ENCODE measurements at regions of chr2 and their contacts with region 1.

Region 1: GRCh38 chr2:46062637-46063412 is 234.4 kb upstream of the EPAS1 start:
- DNase-seq: peak; percentile 82
- H3K4me3 ChIP-seq: no peak overlapping the region; a peak in 1 of 4 replicates
- H3K27ac ChIP-seq: no peak overlapping the region
- H3K4me1 ChIP-seq: peaks cover 14 to 25% of the 10 kb centered on the region in 2 experiments
- H3K27me3 ChIP-seq: no peaks in the 10 kb centered on the region
- CTCF ChIP-seq: peak; percentile 99
- EP300 ChIP-seq: no peak
- RAD21 ChIP-seq: peak; percentile 97

Region 2: GRCh38 chr2:46050489-46050888 is 12.3 kb before region 1 on chr2:
- CTCF ChIA-PET with region 1: interaction called, 72 read pairs
- POLR2A ChIA-PET with region 1: no interaction called
- DNase-seq: no peak
- H3K4me3 ChIP-seq: no peak overlapping the region
- H3K27ac ChIP-seq: no peak overlapping the region
- H3K4me1 ChIP-seq: peaks cover 0 to 9% of the 10 kb centered on the region in 2 experiments; a peak in 1 of 4 replicates
- H3K27me3 ChIP-seq: no peaks in the 10 kb centered on the region
- CTCF ChIP-seq: peak; percentile 21; the same call in 1 of the 2 replicates
- EP300 ChIP-seq: no peak
- RAD21 ChIP-seq: no peak

Region 3: GRCh38 chr2:46073540-46074018 is 10.8 kb after region 1 on chr2:
- CTCF ChIA-PET with region 1: interaction called, 49 read pairs
- POLR2A ChIA-PET with region 1: no interaction called
- DNase-seq: peak; percentile 74
- H3K4me3 ChIP-seq: peak overlapping the region; percentile 37 to 56; a peak in 3 of 4 replicates
- H3K27ac ChIP-seq: peak overlapping the region; percentile 93 to 94
- H3K4me1 ChIP-seq: peaks cover 34 to 39% of the 10 kb centered on the region in 2 experiments
- H3K27me3 ChIP-seq: no peaks in the 10 kb centered on the region
- CTCF ChIP-seq: no peak
- EP300 ChIP-seq: peak; percentile 89 to 100
- RAD21 ChIP-seq: no peak; the same call in 1 of the 2 replicates

Region 4: DNA sequence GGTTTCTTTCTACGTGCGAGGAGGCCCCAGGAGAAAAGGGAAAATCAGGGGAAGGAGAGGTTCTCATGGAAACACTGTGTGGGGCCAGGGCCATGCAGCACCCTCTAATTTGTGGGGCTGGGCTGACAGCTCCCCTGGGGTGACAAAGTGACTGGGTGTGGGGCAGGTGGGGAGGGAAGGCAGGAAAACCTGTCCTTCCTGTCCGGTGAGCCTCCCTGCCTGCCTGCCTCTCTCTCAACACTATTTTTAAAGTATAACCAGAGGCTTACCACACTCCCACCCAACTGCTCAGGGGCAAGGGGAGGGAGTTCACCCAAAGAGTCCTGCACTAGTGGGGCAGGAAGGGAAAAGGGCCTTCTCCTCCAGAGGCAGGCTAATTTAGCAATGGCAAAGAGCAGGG is 223.9 kb after region 1 on chr2:
- CTCF ChIA-PET with region 1: interaction called, 11 read pairs
- POLR2A ChIA-PET with region 1: no interaction called
- DNase-seq: no peak
- H3K4me3 ChIP-seq: no peak overlapping the region
- H3K27ac ChIP-seq: no peak overlapping the region
- H3K4me1 ChIP-seq: peaks cover 0 to 11% of the 10 kb centered on the region in 2 experiments; a peak in 1 of 4 replicates
- H3K27me3 ChIP-seq: no peaks in the 10 kb centered on the region
- CTCF ChIP-seq: no peak
- EP300 ChIP-seq: no peak
- RAD21 ChIP-seq: no peak